ENCODE measurements at regions of chr5 and their contacts with region 1.

Region 1: GRCh38 chr5:138352071-138352721 is at the start of gene KDM3B:
- DNase-seq: peak; percentile 88
- H3K4me3 Mint-ChIP-seq: peak within 1 kb of the TSS; percentile 93
- H3K27ac Mint-ChIP-seq: peak within 1 kb of the TSS; percentile 98
- H3K4me1 Mint-ChIP-seq: peaks cover 47% of the 10 kb centered on the region
- H3K27me3 Mint-ChIP-seq: no peaks in the 10 kb centered on the region
- total RNA-seq, gene KDM3B: 60.4 to 65.7 TPM

Region 2: GRCh38 chr5:138178516-138179276 is 173.5 kb before region 1 on chr5 and contains the starts of genes BRD8 and KIF20A:
- CTCF ChIA-PET with region 1: interaction called, 30 read pairs
- POLR2A ChIA-PET with region 1: interaction called, 6 read pairs
- DNase-seq: peak; percentile 97
- H3K4me3 Mint-ChIP-seq: no peak within 1 kb of the TSS
- H3K27ac Mint-ChIP-seq: no peak within 1 kb of the TSS
- H3K4me1 Mint-ChIP-seq: peaks cover 21% of the 10 kb centered on the region
- H3K27me3 Mint-ChIP-seq: no peaks in the 10 kb centered on the region
- total RNA-seq, gene BRD8: 74.6 to 77.1 TPM
- total RNA-seq, gene KIF20A: 70.9 to 74.7 TPM

Region 3: DNA sequence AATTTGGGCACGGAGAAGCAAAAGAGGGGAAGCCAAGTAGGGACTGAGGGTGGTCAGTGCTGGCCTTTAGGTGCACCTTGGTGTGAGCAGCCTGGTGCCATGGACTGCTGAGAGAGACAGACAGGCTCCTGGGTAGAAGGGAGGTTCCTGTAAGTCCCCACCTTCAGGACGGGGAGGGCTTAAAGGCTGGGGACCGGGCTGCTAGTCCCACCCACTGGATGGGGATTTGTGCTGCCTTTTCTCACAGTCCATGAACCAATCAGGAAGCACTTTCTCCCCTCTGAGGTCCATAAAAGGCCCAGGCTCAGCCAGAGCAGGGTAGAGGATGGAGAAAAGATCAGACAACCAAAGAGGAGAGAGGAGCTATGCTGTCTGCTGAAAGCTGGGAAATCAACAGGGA is 35.8 kb before region 1 on chr5:
- CTCF ChIA-PET with region 1: interaction called, 15 read pairs
- POLR2A ChIA-PET with region 1: no interaction called
- DNase-seq: no peak
- H3K4me3 Mint-ChIP-seq: no peak overlapping the region
- H3K27ac Mint-ChIP-seq: no peak overlapping the region
- H3K4me1 Mint-ChIP-seq: no peaks in the 10 kb centered on the region
- H3K27me3 Mint-ChIP-seq: no peaks in the 10 kb centered on the region

Region 4: DNA sequence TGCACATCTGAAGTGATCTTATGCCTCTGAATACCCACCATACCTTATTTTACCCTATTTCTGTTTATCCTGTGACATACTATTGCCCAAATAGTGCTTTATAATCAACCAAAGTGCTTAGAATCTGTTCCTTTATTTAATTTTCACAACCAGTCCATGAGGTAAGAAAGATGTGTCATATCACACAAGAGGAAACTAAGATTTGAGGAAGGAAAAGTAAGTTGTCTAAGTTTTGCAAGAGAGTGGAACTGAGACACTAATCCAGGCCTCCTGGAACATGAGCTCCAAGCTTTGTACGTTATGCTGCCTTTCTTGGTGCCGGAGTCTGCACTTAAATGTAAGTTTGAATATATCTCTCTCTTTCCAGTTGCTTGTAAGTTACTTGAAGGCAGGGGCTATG is 17.5 kb after region 1 on chr5:
- CTCF ChIA-PET with region 1: interaction called, 119 read pairs
- POLR2A ChIA-PET with region 1: no interaction called
- DNase-seq: no peak
- H3K4me3 Mint-ChIP-seq: no peak overlapping the region
- H3K27ac Mint-ChIP-seq: no peak overlapping the region
- H3K4me1 Mint-ChIP-seq: peaks cover 17% of the 10 kb centered on the region
- H3K27me3 Mint-ChIP-seq: no peaks in the 10 kb centered on the region

Region 5: GRCh38 chr5:138408023-138408422 is 55.8 kb after region 1 on chr5:
- CTCF ChIA-PET with region 1: interaction called, 16 read pairs
- POLR2A ChIA-PET with region 1: no interaction called
- DNase-seq: peak; percentile 16
- H3K4me3 Mint-ChIP-seq: no peak overlapping the region
- H3K27ac Mint-ChIP-seq: no peak overlapping the region
- H3K4me1 Mint-ChIP-seq: peaks cover 14% of the 10 kb centered on the region
- H3K27me3 Mint-ChIP-seq: no peaks in the 10 kb centered on the region

Region 6: GRCh38 chr5:138449501-138450239 is 97.5 kb after region 1 on chr5:
- CTCF ChIA-PET with region 1: interaction called, 13 read pairs
- POLR2A ChIA-PET with region 1: no interaction called
- DNase-seq: peak; percentile 76
- H3K4me3 Mint-ChIP-seq: peak overlapping the region; percentile 11
- H3K27ac Mint-ChIP-seq: no peak overlapping the region
- H3K4me1 Mint-ChIP-seq: peaks cover 5% of the 10 kb centered on the region
- H3K27me3 Mint-ChIP-seq: no peaks in the 10 kb centered on the region

Region 7: GRCh38 chr5:138686668-138687067 is 334.5 kb after region 1 on chr5:
- CTCF ChIA-PET with region 1: no interaction called
- POLR2A ChIA-PET with region 1: no interaction called
- DNase-seq: no peak
- H3K4me3 Mint-ChIP-seq: no peak overlapping the region
- H3K27ac Mint-ChIP-seq: no peak overlapping the region
- H3K4me1 Mint-ChIP-seq: no peaks in the 10 kb centered on the region
- H3K27me3 Mint-ChIP-seq: peaks cover 44% of the 10 kb centered on the region